Activated B cell treated with CpG ODN at 0.5 μM for 24 hours (primary cell): ENCODE measurements at regions of chr1 and their contacts with region 1.

Region 1: GRCh38 chr1:12208764-12209494 is 20.9 kb upstream of the VPS13D start:
- DNase-seq: peak; percentile 81
- ATAC-seq: peak; percentile 71
- H3K4me3 Mint-ChIP-seq: peak overlapping the region; percentile 52
- H3K27ac Mint-ChIP-seq: peak overlapping the region; percentile 86
- H3K4me1 Mint-ChIP-seq: peaks cover 64% of the 10 kb centered on the region
- H3K27me3 Mint-ChIP-seq: no peaks in the 10 kb centered on the region
- CTCF ChIP-seq: peak; percentile 76

Region 2: GRCh38 chr1:11539850-11540772 is 668.8 kb before region 1 on chr1:
- CTCF ChIA-PET with region 1: no interaction called
- POLR2A ChIA-PET with region 1: no interaction called
- intact Hi-C with region 1: no loop called
- DNase-seq: no peak
- ATAC-seq: no peak
- H3K4me3 Mint-ChIP-seq: no peak overlapping the region
- H3K27ac Mint-ChIP-seq: no peak overlapping the region
- H3K4me1 Mint-ChIP-seq: no peaks in the 10 kb centered on the region
- H3K27me3 Mint-ChIP-seq: peaks cover 14% of the 10 kb centered on the region
- CTCF ChIP-seq: no peak

Region 3: GRCh38 chr1:12153181-12153785 is 55.6 kb before region 1 on chr1:
- CTCF ChIA-PET with region 1: no interaction called
- POLR2A ChIA-PET with region 1: interaction called, 15 read pairs
- intact Hi-C with region 1: loop called (anchors 2 kb)
- DNase-seq: peak; percentile 47
- ATAC-seq: peak; percentile 40
- H3K4me3 Mint-ChIP-seq: peak overlapping the region; percentile 52
- H3K27ac Mint-ChIP-seq: peak overlapping the region; percentile 92
- H3K4me1 Mint-ChIP-seq: peaks cover 91% of the 10 kb centered on the region
- H3K27me3 Mint-ChIP-seq: no peaks in the 10 kb centered on the region
- CTCF ChIP-seq: no peak

Region 4: DNA sequence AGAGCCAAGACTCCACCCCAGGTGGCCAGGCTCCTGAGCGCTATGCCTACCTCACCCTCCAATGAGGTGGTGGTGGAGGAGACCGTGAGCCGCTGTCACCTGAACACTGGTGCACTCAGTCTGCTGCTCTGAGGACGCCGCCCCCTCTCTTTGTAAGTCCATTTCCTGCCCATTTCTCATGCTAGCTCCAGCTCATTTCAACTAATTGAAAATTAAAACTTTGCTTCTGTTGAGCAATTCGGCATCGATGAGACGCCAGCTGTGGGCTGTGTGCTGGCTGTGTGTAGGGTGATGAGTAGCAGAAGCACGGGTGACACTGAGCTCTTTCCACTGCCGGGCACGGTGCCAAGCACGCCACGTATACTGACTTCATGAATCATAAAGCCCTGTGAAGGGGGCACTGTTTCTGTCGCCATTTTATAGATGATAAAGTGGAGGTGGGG is 30.9 kb before region 1 on chr1:
- CTCF ChIA-PET with region 1: interaction called, 3 read pairs
- POLR2A ChIA-PET with region 1: interaction called, 3 read pairs
- intact Hi-C with region 1: loop called (anchors 2 kb)
- DNase-seq: no peak
- ATAC-seq: no peak
- H3K4me3 Mint-ChIP-seq: peak overlapping the region; percentile 42
- H3K27ac Mint-ChIP-seq: peak overlapping the region; percentile 18
- H3K4me1 Mint-ChIP-seq: peaks cover 89% of the 10 kb centered on the region
- H3K27me3 Mint-ChIP-seq: no peaks in the 10 kb centered on the region
- CTCF ChIP-seq: no peak

Region 5: DNA sequence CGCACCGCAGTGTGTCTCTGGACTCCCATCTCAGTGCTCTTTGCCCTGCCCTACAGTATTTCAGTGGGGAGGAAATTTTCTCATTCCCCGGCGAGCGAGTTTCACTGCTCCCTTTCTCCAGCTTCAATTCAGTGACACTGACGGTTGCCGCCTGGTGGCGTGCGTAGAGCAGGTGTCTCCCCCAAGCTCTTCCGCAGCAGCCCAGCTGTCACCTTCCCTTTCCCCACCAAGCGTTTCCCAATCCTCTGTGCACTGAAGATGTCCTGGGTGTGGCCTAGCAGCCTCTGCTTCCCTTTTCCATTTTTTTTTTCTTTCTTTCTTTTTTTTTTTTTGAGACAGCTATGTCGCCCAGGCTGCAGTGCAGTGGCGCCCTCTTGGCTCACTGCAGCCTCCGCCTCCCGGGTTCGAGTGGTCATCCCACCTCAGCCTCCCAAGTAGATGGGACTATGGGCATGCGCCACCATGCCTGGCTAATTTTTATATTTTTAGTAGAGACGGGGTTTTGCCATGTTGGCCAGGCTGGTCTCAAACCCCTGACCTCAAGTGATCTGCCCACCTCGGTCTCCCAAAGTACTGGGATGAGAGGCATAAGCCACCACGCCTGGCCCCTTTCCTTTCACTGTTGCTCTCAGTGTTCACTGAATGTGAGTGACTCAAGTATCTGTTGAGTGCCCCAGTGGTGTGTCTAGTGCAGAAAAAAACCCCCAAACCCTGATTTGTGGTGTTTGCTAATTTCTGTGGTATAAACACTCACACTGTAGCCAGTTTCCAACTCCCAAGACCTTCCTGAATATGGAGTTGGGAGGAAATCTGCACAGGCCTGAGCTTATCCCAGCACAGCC is 12.1 kb before region 1 on chr1:
- CTCF ChIA-PET with region 1: interaction called, 15 read pairs
- POLR2A ChIA-PET with region 1: interaction called, 10 read pairs
- intact Hi-C with region 1: no loop called
- DNase-seq: no peak
- ATAC-seq: peak; percentile 29
- H3K4me3 Mint-ChIP-seq: no peak overlapping the region
- H3K27ac Mint-ChIP-seq: peak overlapping the region; percentile 30
- H3K4me1 Mint-ChIP-seq: peaks cover 65% of the 10 kb centered on the region
- H3K27me3 Mint-ChIP-seq: no peaks in the 10 kb centered on the region
- CTCF ChIP-seq: no peak